A549 (cell line): ENCODE measurements at regions of chr1 and their contacts with region 1.

Region 1: GRCh38 chr1:212455803-212456528 is 23.2 kb downstream of the NENF start:
- DNase-seq: peak; percentile 80 to 82
- ATAC-seq: peak; percentile 84 to 91
- H3K4me3 ChIP-seq: no peak overlapping the region
- H3K27ac ChIP-seq: no peak overlapping the region
- H3K4me1 ChIP-seq: no peaks in the 10 kb centered on the region
- CTCF ChIP-seq: peak; percentile 97
- EP300 ChIP-seq: no peak
- POLR2A ChIP-seq: no peak
- RAD21 ChIP-seq: peak; percentile 96 to 98

Region 2: GRCh38 chr1:211680752-211681327 is 775.1 kb before region 1 on chr1:
- CTCF ChIA-PET with region 1: interaction called, 69 read pairs
- POLR2A ChIA-PET with region 1: no interaction called
- DNase-seq: peak; percentile 89 to 91
- ATAC-seq: peak; percentile 84 to 88
- H3K4me3 ChIP-seq: no peak overlapping the region
- H3K27ac ChIP-seq: peak overlapping the region; percentile 50 to 71; a peak in 5 of 6 replicates
- H3K4me1 ChIP-seq: peaks cover 9% of the 10 kb centered on the region
- CTCF ChIP-seq: peak; percentile 95
- EP300 ChIP-seq: no peak
- POLR2A ChIP-seq: no peak
- RAD21 ChIP-seq: peak; percentile 96 to 97

Region 3: DNA sequence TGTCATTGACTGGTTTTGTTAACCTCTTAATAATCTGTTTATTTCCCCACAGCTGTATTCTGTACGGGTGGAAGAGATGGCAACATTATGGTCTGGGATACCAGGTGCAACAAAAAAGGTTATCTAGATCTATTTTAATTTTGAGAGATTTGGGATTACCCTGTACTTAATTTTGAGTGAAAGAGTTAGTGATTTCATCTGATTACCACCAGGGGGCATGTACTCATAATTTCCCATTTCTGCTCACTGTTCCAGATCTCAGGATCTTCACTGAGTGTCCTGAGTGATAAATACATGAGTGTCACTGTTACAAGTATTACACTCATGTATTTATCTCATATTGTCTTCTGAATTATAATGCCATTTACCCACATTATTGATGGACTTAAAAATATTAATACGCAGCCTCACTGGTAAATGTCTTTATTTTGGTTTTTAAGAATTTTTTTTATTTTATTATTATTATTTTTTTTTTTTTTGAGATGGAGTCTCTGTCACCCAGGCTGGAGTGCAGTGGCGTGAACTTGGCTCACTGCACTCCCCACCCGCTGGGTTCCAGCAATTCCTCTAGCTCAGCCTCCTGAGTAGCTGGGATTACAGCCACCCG is 393.0 kb before region 1 on chr1:
- CTCF ChIA-PET with region 1: interaction called, 123 read pairs
- POLR2A ChIA-PET with region 1: no interaction called
- DNase-seq: peak; percentile 41 to 55
- ATAC-seq: peak; percentile 73 to 89
- H3K4me3 ChIP-seq: no peak overlapping the region
- H3K27ac ChIP-seq: no peak overlapping the region
- H3K4me1 ChIP-seq: no peaks in the 10 kb centered on the region
- CTCF ChIP-seq: peak; percentile 80
- EP300 ChIP-seq: no peak
- POLR2A ChIP-seq: no peak
- RAD21 ChIP-seq: peak; percentile 46 to 60

Region 4: GRCh38 chr1:212089560-212090163 is 366.3 kb before region 1 on chr1:
- CTCF ChIA-PET with region 1: interaction called, 10 read pairs
- POLR2A ChIA-PET with region 1: no interaction called
- DNase-seq: no peak
- ATAC-seq: no peak
- H3K4me3 ChIP-seq: no peak overlapping the region
- H3K27ac ChIP-seq: no peak overlapping the region
- H3K4me1 ChIP-seq: no peaks in the 10 kb centered on the region
- CTCF ChIP-seq: no peak
- EP300 ChIP-seq: no peak
- POLR2A ChIP-seq: no peak
- RAD21 ChIP-seq: no peak

Region 5: DNA sequence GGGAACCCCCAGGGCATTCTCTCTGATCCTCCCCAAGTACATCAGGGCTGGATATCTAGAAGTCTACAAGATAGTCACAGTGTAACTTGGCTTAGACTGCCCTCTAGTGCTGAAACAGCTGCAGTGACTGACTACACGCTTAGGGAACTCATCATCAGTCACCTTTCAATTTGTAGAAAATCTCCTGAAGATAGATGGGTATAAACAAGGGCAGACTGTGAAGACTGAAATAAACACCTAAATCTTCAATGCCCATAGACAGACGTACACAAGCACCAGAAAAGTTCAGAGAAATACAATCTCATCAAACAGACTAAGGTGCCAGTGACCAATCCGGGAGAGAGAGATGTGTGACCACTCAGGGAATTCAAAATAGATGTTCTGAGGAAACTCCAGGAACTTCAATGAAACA is 87.9 kb before region 1 on chr1:
- CTCF ChIA-PET with region 1: interaction called, 25 read pairs
- POLR2A ChIA-PET with region 1: no interaction called
- DNase-seq: peak; percentile 54 to 74
- ATAC-seq: peak; percentile 97 to 98
- H3K4me3 ChIP-seq: no peak overlapping the region
- H3K27ac ChIP-seq: no peak overlapping the region
- H3K4me1 ChIP-seq: no peaks in the 10 kb centered on the region
- CTCF ChIP-seq: peak; percentile 76
- EP300 ChIP-seq: no peak
- POLR2A ChIP-seq: no peak
- RAD21 ChIP-seq: peak; percentile 78 to 83

Region 6: GRCh38 chr1:212432706-212433576 is 23.0 kb before region 1 on chr1 and contains the start of gene NENF:
- CTCF ChIA-PET with region 1: interaction called, 46 read pairs
- POLR2A ChIA-PET with region 1: no interaction called
- DNase-seq: peak; percentile 80 to 95
- ATAC-seq: peak; percentile 98 to 99
- H3K4me3 ChIP-seq: peak within 1 kb of the TSS; percentile 71
- H3K27ac ChIP-seq: peak within 1 kb of the TSS; percentile 82 to 98
- H3K4me1 ChIP-seq: peaks cover 23% of the 10 kb centered on the region
- CTCF ChIP-seq: no peak
- EP300 ChIP-seq: no peak
- POLR2A ChIP-seq: peak; percentile 76
- RAD21 ChIP-seq: no peak
- polyA plus RNA-seq, gene NENF: 83.9 and 90.5 TPM in 2 replicates

Region 7: GRCh38 chr1:212782422-212783154 is 326.6 kb after region 1 on chr1:
- CTCF ChIA-PET with region 1: interaction called, 11 read pairs
- POLR2A ChIA-PET with region 1: no interaction called
- DNase-seq: peak in 1 of 2 experiments; percentile 48
- ATAC-seq: peak; percentile 78 to 80
- H3K4me3 ChIP-seq: no peak overlapping the region
- H3K27ac ChIP-seq: no peak overlapping the region
- H3K4me1 ChIP-seq: no peaks in the 10 kb centered on the region
- CTCF ChIP-seq: peak; percentile 83
- EP300 ChIP-seq: no peak
- POLR2A ChIP-seq: no peak
- RAD21 ChIP-seq: peak; percentile 78 to 85